ENCODE measurements at regions of chr20 and their contacts with region 1.

Region 1: GRCh38 chr20:50165684-50166554 is 12.4 kb upstream of the PEDS1 start:
- DNase-seq: peak; percentile 92
- ATAC-seq: peak; percentile 99
- H3K4me3 Mint-ChIP-seq: peak overlapping the region; percentile 76
- H3K27ac Mint-ChIP-seq: peak overlapping the region; percentile 83
- H3K4me1 Mint-ChIP-seq: peaks cover 15% of the 10 kb centered on the region
- H3K27me3 Mint-ChIP-seq: peaks cover 3% of the 10 kb centered on the region

Region 2: DNA sequence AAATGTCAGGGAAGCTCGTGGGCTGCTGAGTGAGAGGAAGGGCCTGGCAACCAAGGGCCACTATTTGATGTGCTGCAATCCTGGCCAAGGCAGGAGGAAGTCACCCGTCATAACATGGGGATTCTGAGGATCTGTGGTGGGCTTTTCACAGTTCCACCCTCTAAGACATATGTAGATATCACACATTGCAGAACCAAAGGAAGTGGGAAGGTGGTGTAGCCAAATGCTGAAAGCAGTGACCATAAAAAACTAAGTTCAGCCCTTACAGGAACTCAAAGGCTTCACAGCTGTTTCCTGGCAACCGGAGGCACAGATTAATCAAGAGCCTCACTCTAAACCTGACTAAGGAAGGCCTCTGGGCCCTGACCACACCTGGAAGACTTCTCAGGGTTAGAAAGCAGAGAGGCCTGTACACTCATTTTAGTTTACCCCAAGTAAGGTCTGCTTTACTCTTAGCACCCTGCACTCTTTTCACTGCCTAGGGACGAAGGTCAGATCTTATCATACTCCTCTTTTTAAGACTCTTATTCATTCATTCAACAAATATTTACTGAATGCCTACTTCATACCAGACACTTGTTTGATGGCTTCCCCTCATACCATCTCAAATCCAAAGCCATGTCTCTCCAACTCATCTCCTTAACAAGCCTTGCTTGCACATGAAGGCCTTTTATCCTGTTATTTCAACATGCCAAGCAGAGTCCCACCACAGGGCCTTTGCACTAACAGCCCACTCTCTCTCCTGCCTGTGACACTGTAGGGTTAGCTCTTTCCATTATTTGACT is 55.6 kb before region 1 on chr20:
- CTCF ChIA-PET with region 1: interaction called, 16 read pairs
- DNase-seq: peak; percentile 92
- ATAC-seq: peak; percentile 58
- H3K4me3 Mint-ChIP-seq: peak overlapping the region; percentile 89
- H3K27ac Mint-ChIP-seq: peak overlapping the region; percentile 98
- H3K4me1 Mint-ChIP-seq: peaks cover 79% of the 10 kb centered on the region
- H3K27me3 Mint-ChIP-seq: no peaks in the 10 kb centered on the region

Region 3: DNA sequence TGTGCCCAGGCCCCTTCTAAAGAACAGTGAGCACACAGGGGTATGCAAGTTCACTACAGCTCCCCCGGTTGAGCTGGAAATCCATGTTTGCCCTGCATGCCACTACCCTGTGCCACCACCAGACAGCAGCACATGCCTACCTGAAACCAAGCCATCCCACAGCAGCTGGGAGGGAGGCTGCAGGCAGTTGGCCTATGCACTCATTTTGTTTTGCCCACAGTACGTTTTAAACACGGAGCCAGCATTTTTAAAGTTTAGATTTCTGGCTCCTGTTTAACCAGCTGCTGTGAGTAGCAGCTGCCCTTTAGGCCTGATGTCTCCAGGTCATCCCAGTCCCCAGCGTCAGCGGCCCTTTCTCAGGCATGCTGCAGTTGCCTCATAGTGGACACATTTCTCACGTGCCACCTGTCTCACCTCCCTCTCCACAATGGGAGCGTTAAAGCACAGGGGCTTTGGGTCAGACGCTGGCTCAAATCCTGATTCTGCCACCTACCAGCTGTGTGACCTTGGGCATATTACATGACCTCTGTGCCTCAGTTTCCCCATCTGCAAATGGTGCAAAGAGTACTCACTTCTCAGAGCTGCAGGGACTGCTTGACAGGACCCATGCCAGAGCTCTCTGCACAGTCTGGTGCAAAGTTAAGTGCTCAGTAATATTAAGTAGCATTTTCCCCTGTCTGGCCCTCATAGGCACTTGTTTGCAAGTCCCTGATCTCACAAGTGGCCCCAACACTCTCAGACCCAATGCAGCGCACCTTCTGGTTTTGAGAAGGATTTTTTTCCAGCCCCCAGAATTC is 44.8 kb before region 1 on chr20:
- CTCF ChIA-PET with region 1: interaction called, 135 read pairs
- DNase-seq: peak; percentile 71
- ATAC-seq: peak; percentile 72
- H3K4me3 Mint-ChIP-seq: no peak overlapping the region
- H3K27ac Mint-ChIP-seq: no peak overlapping the region
- H3K4me1 Mint-ChIP-seq: peaks cover 8% of the 10 kb centered on the region
- H3K27me3 Mint-ChIP-seq: no peaks in the 10 kb centered on the region

Region 4: GRCh38 chr20:50179507-50180016 is 13.6 kb after region 1 on chr20:
- CTCF ChIA-PET with region 1: interaction called, 10 read pairs
- DNase-seq: no peak
- ATAC-seq: no peak
- H3K4me3 Mint-ChIP-seq: no peak overlapping the region
- H3K27ac Mint-ChIP-seq: no peak overlapping the region
- H3K4me1 Mint-ChIP-seq: no peaks in the 10 kb centered on the region
- H3K27me3 Mint-ChIP-seq: peaks cover 12% of the 10 kb centered on the region

Measured in activated CD8-positive, alpha-beta memory T cell treated with anti-CD3 and anti-CD28 coated beads, Interleukin-2, amount 10 ng/mL, durations not matched to agents 7 days and 5 days (primary cell).